CD8-positive, alpha-beta T cell (primary cell): ENCODE measurements at regions of chr3 and their contacts with region 1.

Region 1: DNA sequence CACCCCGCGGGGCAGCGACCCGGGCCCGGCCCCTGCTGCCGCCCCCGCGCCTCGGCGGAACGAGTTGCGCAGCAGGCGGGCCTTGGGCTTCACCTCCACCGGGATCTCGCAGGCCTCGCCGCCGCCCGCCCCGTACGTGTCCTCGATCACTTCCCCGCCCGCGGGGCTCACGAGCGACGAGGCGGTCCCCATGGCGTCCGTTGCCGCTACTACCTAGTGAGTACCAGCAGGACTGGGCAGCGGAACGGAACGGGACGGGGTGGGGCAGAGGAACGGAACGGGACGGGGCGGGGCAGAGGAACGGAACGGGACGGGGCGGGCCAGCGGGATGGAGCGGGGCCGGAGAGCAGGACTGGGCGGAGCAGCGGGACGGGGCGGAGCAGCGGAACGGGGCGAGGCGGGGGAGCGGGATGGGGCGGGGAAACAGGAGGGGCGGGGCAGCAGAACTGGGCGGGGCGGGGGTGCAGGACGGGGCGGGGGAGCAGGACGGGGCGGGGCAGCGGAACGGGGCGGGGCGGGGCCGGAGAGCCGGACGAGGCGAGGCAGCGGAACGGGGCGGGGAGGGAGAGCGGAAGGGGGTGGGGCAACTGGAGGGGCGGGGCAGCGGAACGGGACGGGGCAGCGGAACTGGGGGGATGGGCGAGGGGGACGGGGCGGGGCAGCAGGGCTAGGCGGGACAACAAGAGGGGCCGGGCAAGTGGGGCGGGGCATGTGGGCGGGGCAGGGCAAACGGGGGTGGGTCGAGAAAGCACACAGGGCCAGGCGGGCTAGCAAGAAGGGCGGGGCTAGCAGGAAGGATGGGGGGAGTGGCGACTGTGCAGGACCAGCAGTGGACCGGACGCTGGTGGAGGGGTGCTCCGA is at the start of gene NPHP3:
- DNase-seq: peak; percentile 95 to 98 (median 97)
- ATAC-seq: peak; percentile 76
- H3K4me3 ChIP-seq: peak within 1 kb of the TSS; percentile 88 to 92
- H3K4me3 Mint-ChIP-seq: peak within 1 kb of the TSS; percentile 91
- H3K27ac ChIP-seq: peak within 1 kb of the TSS; percentile 59 to 67
- H3K27ac Mint-ChIP-seq: peak within 1 kb of the TSS; percentile 88
- H3K4me1 ChIP-seq: peaks cover 25% of the 10 kb centered on the region
- H3K4me1 Mint-ChIP-seq: peaks cover 42% of the 10 kb centered on the region
- H3K27me3 ChIP-seq: no peaks in the 10 kb centered on the region
- H3K27me3 Mint-ChIP-seq: no peaks in the 10 kb centered on the region
- CTCF ChIP-seq: no peak
- total RNA-seq, gene NPHP3: 21.9 to 24.6 TPM

Region 2: DNA sequence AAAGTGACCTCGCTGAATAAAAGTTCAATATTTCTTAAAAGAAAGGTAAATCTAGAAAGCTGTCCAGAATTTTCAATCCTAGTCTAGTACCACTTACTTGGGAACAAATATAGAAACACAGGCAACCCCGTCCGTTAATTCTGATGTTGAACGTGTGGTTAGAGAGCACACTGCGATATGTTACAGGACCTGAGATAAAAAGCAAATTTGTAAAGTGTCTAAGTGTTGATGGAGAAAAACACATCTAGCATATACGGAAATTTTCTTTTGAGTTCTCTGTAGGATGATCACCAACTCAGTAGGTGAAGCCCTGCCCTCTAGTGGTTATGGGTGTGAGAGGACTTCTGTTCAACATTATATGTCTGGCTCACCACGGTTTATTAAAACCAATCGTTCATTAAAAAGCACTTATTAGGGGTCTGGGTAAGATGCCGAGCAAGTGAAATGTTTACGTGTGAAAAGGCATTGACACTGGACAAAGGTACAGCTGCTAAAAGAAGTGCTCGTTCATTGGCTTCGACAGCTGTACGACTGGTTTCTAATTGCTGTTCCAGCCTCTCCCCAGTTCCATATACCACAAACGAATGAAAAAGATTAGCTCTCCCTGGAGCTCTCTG is 1829.5 kb before region 1 on chr3:
- CTCF ChIA-PET with region 1: no interaction called
- POLR2A ChIA-PET with region 1: no interaction called
- intact Hi-C with region 1: loop called in 1 of 2 experiments (anchors 2 kb)
- DNase-seq: peak; percentile 21 to 89 (median 61)
- ATAC-seq: peak; percentile 63
- H3K4me3 ChIP-seq: peak overlapping the region; percentile 68 to 80
- H3K4me3 Mint-ChIP-seq: peak overlapping the region; percentile 98
- H3K27ac ChIP-seq: peak overlapping the region; percentile 86 to 87
- H3K27ac Mint-ChIP-seq: peak overlapping the region; percentile 99
- H3K4me1 ChIP-seq: peaks cover 27% of the 10 kb centered on the region
- H3K4me1 Mint-ChIP-seq: peaks cover 33% of the 10 kb centered on the region
- H3K27me3 ChIP-seq: no peaks in the 10 kb centered on the region
- H3K27me3 Mint-ChIP-seq: no peaks in the 10 kb centered on the region
- CTCF ChIP-seq: peak; percentile 87

Region 3: DNA sequence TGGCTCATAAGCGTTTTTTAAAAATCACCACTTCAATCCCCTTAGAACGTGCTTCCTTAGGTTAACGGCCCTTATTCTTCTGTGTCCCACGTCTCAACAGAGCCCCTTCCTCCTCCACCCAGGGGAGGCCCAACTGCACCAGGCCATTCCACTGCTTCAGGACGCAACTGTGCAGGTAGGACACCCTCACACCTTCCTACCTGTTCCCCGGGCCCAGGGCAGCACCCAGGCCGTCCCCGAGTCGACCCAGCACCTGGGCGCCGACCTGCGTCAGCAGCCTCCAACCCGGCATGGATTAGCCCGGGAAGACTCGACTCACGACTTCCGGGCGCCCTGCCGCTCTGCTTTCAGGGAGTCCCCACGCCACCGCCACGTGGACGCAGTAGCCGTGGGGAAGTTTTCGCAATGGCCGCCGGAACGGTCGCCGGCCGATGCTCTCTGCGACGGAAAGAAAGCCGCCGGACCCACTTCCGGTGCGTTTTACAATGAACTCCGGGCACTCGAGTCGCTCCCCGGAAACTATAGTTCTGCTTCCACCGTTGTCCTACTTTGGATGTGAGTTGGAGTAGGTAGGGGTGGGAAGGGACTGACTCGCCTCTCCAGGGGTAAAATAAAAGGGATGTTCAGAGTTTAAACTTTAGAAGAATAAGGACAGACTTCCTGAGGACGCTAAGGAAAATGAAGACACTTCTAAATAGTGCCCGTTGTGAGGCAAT is 1219.7 kb before region 1 on chr3 and contains the start of gene MRPL3:
- CTCF ChIA-PET with region 1: no interaction called
- POLR2A ChIA-PET with region 1: no interaction called
- intact Hi-C with region 1: loop called in 1 of 2 experiments (anchors 5 kb)
- DNase-seq: peak; percentile 67 to 92 (median 84)
- ATAC-seq: peak; percentile 88
- H3K4me3 ChIP-seq: peak within 1 kb of the TSS; percentile 74 to 95
- H3K4me3 Mint-ChIP-seq: peak within 1 kb of the TSS; percentile 97
- H3K27ac ChIP-seq: peak within 1 kb of the TSS; percentile 78 to 83
- H3K27ac Mint-ChIP-seq: peak within 1 kb of the TSS; percentile 95
- H3K4me1 ChIP-seq: peaks cover 27% of the 10 kb centered on the region
- H3K4me1 Mint-ChIP-seq: peaks cover 45% of the 10 kb centered on the region
- H3K27me3 ChIP-seq: no peaks in the 10 kb centered on the region
- H3K27me3 Mint-ChIP-seq: no peaks in the 10 kb centered on the region
- CTCF ChIP-seq: no peak
- total RNA-seq, gene MRPL3: 43.6 to 45.0 TPM

Region 4: GRCh38 chr3:132641837-132642538 is 80.4 kb before region 1 on chr3:
- CTCF ChIA-PET with region 1: no interaction called
- POLR2A ChIA-PET with region 1: no interaction called
- intact Hi-C with region 1: no loop called
- DNase-seq: peak in 2 of 9 experiments; percentile 39 to 55
- ATAC-seq: peak; percentile 54
- H3K4me3 ChIP-seq: no peak overlapping the region
- H3K4me3 Mint-ChIP-seq: no peak overlapping the region
- H3K27ac ChIP-seq: no peak overlapping the region
- H3K27ac Mint-ChIP-seq: no peak overlapping the region
- H3K4me1 ChIP-seq: no peaks in the 10 kb centered on the region
- H3K4me1 Mint-ChIP-seq: peaks cover 5% of the 10 kb centered on the region
- H3K27me3 ChIP-seq: no peaks in the 10 kb centered on the region
- H3K27me3 Mint-ChIP-seq: no peaks in the 10 kb centered on the region
- CTCF ChIP-seq: peak; percentile 85

Region 5: DNA sequence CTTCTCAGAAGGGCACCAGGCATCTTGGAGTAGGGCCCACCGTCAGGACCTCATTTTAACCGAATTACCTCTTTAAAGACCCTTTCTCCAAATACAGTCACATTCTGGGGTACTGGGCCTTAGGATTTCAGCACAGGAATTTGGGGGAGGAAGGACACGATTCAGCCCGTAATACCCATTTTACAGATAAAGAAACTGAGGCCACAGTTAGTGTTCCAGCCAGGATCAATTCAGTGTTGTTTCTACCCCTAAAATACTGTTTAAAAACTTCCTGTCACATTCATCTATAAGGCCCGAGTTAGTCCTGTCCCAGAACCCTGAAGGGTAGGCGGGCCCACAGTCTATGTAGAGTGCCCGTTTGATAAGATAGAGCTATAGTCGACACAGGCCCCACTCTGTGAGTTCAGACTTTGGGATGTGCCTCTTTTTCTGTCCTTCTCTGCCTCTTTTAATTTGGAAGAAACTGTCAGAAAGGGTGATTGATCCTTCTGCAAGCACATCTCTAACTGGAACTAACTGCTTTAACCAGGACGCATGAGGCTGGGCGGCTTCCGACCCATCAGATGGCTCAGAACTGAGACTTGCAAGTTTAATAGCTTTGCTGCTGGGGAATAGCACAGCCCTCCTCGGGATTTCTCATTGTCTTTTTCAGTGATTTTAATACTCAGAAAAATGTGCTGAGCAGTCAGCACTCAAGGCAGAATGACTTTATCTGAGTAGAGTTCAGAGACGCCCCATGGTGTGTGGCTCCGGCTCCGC is 696.9 kb after region 1 on chr3:
- CTCF ChIA-PET with region 1: interaction called, 43 read pairs
- POLR2A ChIA-PET with region 1: no interaction called
- intact Hi-C with region 1: loop called (anchors 1 kb)
- DNase-seq: no peak
- ATAC-seq: no peak
- H3K4me3 ChIP-seq: no peak overlapping the region
- H3K4me3 Mint-ChIP-seq: no peak overlapping the region
- H3K27ac ChIP-seq: no peak overlapping the region
- H3K27ac Mint-ChIP-seq: no peak overlapping the region
- H3K4me1 ChIP-seq: no peaks in the 10 kb centered on the region
- H3K4me1 Mint-ChIP-seq: peaks cover 4% of the 10 kb centered on the region
- H3K27me3 ChIP-seq: peaks cover 0 to 2% of the 10 kb centered on the region in 2 experiments
- H3K27me3 Mint-ChIP-seq: no peaks in the 10 kb centered on the region
- CTCF ChIP-seq: no peak

Region 6: GRCh38 chr3:133494469-133494868 is 772.1 kb after region 1 on chr3:
- CTCF ChIA-PET with region 1: no interaction called
- POLR2A ChIA-PET with region 1: no interaction called
- intact Hi-C with region 1: loop called (anchors 5 kb)
- DNase-seq: peak in 2 of 9 experiments; percentile 17 to 30
- ATAC-seq: no peak
- H3K4me3 ChIP-seq: no peak overlapping the region
- H3K4me3 Mint-ChIP-seq: no peak overlapping the region
- H3K27ac ChIP-seq: no peak overlapping the region
- H3K27ac Mint-ChIP-seq: peak overlapping the region; percentile 78
- H3K4me1 ChIP-seq: peaks cover 53% of the 10 kb centered on the region
- H3K4me1 Mint-ChIP-seq: peaks cover 65% of the 10 kb centered on the region
- H3K27me3 ChIP-seq: no peaks in the 10 kb centered on the region
- H3K27me3 Mint-ChIP-seq: no peaks in the 10 kb centered on the region
- CTCF ChIP-seq: no peak

Region 7: DNA sequence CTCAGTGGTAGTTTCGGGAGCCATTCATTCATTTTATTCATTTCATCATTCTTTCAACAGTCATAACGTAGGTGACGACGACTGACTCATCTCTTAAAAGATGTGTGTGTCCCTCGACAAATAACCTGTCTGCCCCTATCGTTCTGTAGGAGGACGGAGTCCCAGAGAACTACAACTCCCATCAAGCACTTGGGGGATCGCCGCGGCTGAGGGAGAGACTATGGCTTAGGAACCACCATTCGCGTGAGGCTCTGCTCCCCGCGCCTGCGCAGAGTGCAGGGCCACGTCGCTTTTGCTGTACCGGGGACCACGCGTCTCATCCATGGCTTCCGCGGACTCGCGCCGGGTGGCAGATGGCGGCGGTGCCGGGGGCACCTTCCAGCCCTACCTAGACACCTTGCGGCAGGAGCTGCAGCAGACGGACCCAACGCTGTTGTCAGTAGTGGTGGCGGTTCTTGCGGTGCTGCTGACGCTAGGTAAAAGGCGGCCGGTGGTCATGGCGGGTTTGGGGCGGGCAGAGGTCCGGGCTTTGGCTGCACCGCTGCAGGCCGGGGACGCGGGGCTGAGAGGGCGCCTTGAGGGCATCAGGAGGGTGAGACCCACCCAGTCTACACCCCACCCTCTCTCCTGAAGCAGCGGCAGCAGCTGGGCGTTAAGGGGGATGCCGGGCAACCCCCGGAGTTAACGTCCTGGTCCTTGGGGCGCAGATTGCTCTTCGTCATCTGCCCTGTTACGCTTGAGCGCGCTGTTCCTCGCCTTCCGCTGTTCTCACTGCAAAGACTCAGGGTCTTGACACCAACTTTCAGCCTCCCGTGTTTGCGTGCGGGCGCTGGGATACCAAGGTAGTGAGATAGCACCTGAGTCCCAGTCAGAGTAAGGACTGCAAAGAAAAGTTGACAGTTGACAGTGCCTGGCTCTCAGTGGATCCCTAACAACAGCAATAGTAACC is 1083.4 kb after region 1 on chr3 and contains the start of gene SRPRB:
- CTCF ChIA-PET with region 1: no interaction called
- POLR2A ChIA-PET with region 1: no interaction called
- intact Hi-C with region 1: loop called (anchors 1 to 2 kb)
- DNase-seq: peak; percentile 92 to 98 (median 95)
- ATAC-seq: peak; percentile 94
- H3K4me3 ChIP-seq: peak within 1 kb of the TSS; percentile 81 to 91
- H3K4me3 Mint-ChIP-seq: peak within 1 kb of the TSS; percentile 97
- H3K27ac ChIP-seq: peak within 1 kb of the TSS; percentile 77 to 81
- H3K27ac Mint-ChIP-seq: peak within 1 kb of the TSS; percentile 96
- H3K4me1 ChIP-seq: peaks cover 18% of the 10 kb centered on the region
- H3K4me1 Mint-ChIP-seq: peaks cover 37% of the 10 kb centered on the region
- H3K27me3 ChIP-seq: no peaks in the 10 kb centered on the region
- H3K27me3 Mint-ChIP-seq: peaks cover 4% of the 10 kb centered on the region
- CTCF ChIP-seq: no peak
- total RNA-seq, gene SRPRB: 25.7 to 30.1 TPM

Region 8: GRCh38 chr3:134250717-134251220 is 1528.4 kb after region 1 on chr3 and contains the start of gene RYK:
- CTCF ChIA-PET with region 1: no interaction called
- POLR2A ChIA-PET with region 1: no interaction called
- intact Hi-C with region 1: loop called in 1 of 2 experiments (anchors 5 kb)
- DNase-seq: peak; percentile 50 to 89 (median 73)
- ATAC-seq: peak; percentile 74
- H3K4me3 ChIP-seq: peak within 1 kb of the TSS; percentile 76 to 86
- H3K4me3 Mint-ChIP-seq: peak within 1 kb of the TSS; percentile 94
- H3K27ac ChIP-seq: peak within 1 kb of the TSS; percentile 65 to 68
- H3K27ac Mint-ChIP-seq: peak within 1 kb of the TSS; percentile 94
- H3K4me1 ChIP-seq: peaks cover 17% of the 10 kb centered on the region
- H3K4me1 Mint-ChIP-seq: peaks cover 44% of the 10 kb centered on the region
- H3K27me3 ChIP-seq: no peaks in the 10 kb centered on the region
- H3K27me3 Mint-ChIP-seq: no peaks in the 10 kb centered on the region
- CTCF ChIP-seq: no peak
- total RNA-seq, gene RYK: 63.6 to 64.7 TPM